Endothelial cell of umbilical vein (primary cell): ENCODE measurements at regions of chr11 and their contacts with region 1.

Region 1: GRCh38 chr11:66069715-66070603 is at the start of gene PACS1:
- DNase-seq: peak; percentile 69
- H3K4me3 ChIP-seq: peak within 1 kb of the TSS; percentile 70 to 91 (median 86)
- H3K27ac ChIP-seq: peak within 1 kb of the TSS; percentile 43
- H3K4me1 ChIP-seq: peaks cover 21% of the 10 kb centered on the region
- H3K27me3 ChIP-seq: no peaks in the 10 kb centered on the region
- CTCF ChIP-seq: peak in 1 of 2 donors; percentile 0
- POLR2A ChIP-seq: peak; percentile 73
- total RNA-seq, gene PACS1: 52.8 and 64.4 TPM in 2 replicates

Region 2: DNA sequence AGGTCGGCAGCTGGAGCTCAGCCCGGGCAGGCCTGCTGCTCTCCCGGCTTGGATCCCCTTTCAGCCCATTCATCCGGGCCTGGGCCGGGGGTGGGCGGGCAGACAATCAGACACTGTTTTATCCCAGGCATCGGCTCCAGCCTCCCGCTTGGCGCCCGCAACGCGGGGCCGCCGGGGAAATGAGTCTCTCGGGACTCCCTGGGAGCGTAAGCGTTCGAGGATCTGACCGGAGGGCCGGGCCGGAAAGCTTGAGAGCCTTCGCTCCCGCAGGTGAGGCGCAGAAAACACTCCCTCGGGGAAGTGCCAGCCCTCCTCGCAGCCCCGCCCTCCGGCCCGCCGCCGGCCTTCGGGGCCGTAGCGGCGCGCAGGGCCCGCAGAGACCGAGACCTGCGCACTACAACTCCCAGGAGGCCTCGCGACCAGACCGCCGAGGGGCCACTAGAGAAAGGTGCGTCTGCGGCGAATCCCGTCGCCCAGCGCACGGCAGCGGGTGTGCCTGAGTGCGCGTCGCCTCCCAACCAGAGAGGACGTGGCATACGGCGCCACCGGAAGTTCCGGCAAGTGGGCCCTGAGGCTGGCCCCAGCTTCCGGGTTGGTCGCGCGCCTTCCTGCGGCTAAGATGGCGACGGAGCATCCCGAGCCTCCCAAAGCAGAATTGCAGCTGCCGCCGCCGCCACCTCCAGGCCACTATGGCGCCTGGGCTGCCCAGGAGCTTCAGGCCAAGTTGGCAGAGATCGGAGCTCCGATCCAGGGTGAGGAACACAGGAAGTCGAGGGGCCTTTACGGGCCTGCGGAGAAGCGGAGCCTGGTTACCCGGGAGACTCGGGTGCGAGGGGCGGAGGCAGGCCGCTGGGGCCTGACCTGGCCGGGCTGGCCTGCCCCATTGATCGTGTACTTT is 17.9 kb before region 1 on chr11 and contains the start of gene SF3B2:
- CTCF ChIA-PET with region 1: interaction called, 16 read pairs
- POLR2A ChIA-PET with region 1: no interaction called
- dilution Hi-C with region 1: no loop called
- intact Hi-C with region 1: loop called (anchors 1 kb)
- DNase-seq: peak; percentile 99
- H3K4me3 ChIP-seq: peak within 1 kb of the TSS; percentile 67 to 93 (median 80)
- H3K27ac ChIP-seq: peak within 1 kb of the TSS; percentile 63
- H3K4me1 ChIP-seq: peaks cover 14% of the 10 kb centered on the region
- H3K27me3 ChIP-seq: peaks cover 0 to 1% of the 10 kb centered on the region in 2 experiments
- CTCF ChIP-seq: no peak
- POLR2A ChIP-seq: peak; percentile 88
- total RNA-seq, gene SF3B2: 179 and 196 TPM in 2 replicates

Region 3: GRCh38 chr11:66081505-66081904 is 11.5 kb after region 1 on chr11:
- CTCF ChIA-PET with region 1: interaction called, 18 read pairs
- POLR2A ChIA-PET with region 1: no interaction called
- dilution Hi-C with region 1: no loop called
- intact Hi-C with region 1: no loop called
- DNase-seq: peak; percentile 44
- H3K4me3 ChIP-seq: no peak overlapping the region
- H3K27ac ChIP-seq: peak overlapping the region; percentile 52
- H3K4me1 ChIP-seq: peaks cover 40% of the 10 kb centered on the region
- H3K27me3 ChIP-seq: no peaks in the 10 kb centered on the region
- CTCF ChIP-seq: no peak
- POLR2A ChIP-seq: no peak

Region 4: GRCh38 chr11:66112601-66113098 is 42.7 kb after region 1 on chr11:
- CTCF ChIA-PET with region 1: interaction called, 10 read pairs
- POLR2A ChIA-PET with region 1: no interaction called
- dilution Hi-C with region 1: no loop called
- intact Hi-C with region 1: loop called (anchors 5 kb)
- DNase-seq: peak; percentile 87
- H3K4me3 ChIP-seq: no peak overlapping the region
- H3K27ac ChIP-seq: peak overlapping the region; percentile 54
- H3K4me1 ChIP-seq: peaks cover 47% of the 10 kb centered on the region
- H3K27me3 ChIP-seq: no peaks in the 10 kb centered on the region
- CTCF ChIP-seq: no peak
- POLR2A ChIP-seq: no peak

Region 5: DNA sequence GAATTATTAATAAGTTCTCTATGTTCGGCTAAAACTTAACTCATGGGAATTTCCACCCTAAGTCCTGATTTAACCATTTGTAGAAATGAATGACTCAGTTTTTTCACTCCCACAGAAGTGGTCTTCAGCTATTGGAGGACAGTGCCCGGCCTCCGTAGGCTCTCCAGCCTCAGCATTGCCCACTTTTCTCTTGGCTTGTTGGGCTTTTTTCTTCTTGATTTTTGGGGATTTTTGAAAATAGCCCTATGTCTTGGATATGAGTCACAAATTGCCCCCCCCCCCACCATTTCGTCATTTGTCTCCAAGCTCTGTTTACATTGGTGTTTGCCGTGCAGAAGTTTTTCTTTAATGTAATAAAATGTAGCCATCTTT is 66.8 kb after region 1 on chr11:
- CTCF ChIA-PET with region 1: interaction called, 85 read pairs
- POLR2A ChIA-PET with region 1: interaction called, 4 read pairs
- dilution Hi-C with region 1: no loop called
- intact Hi-C with region 1: loop called (anchors 1 kb)
- DNase-seq: no peak
- H3K4me3 ChIP-seq: no peak overlapping the region
- H3K27ac ChIP-seq: peak overlapping the region; percentile 27
- H3K4me1 ChIP-seq: peaks cover 13% of the 10 kb centered on the region
- H3K27me3 ChIP-seq: no peaks in the 10 kb centered on the region
- CTCF ChIP-seq: no peak
- POLR2A ChIP-seq: no peak

Region 6: DNA sequence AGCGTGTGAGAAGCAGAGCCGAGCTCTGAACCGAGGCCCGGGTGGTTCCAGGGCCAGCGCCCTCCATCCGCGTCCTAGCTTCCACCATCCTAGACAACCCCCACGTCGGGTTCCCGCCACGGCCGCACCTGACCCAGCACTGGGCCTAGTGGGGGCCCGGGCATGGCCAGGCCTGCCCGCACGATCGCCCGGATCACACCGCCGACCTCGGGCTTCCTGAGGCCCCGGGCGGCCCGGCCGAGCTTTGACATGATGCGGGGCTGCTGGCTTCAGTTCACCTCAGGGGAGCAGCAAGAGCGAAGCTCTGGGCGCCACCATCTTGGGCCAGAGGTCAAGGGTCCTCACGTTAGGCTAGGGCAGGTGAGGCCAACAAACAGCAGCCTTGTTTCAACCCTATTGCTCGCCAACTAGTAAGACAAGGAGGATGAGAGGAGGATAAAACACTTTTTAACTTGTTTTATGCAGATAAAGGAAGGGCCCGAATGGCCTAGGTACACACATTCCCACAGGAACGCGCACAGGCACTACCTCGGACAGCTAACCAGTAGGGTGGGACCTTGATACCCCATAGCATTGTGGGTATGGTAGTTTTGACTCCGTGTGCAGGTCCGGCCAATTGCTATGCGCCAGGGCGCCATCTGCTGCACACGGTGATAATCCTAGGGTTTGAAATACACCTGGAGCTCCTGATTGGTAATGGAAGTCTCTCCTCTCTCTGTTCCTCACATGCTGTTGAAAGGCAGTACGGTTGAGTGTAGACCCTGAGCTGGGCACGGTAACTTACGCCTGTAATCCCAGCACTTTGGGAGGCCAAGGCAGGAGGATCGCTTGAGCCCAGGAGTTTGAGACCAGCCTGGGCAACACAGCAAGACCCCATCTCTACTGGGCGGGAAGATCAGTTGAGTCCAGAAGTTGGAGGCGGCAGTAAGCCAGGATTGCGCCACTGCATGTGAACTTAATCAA is 368.8 kb after region 1 on chr11 and contains the start of gene MRPL11:
- CTCF ChIA-PET with region 1: no interaction called
- POLR2A ChIA-PET with region 1: no interaction called
- dilution Hi-C with region 1: no loop called
- intact Hi-C with region 1: no loop called
- DNase-seq: peak; percentile 95
- H3K4me3 ChIP-seq: peak within 1 kb of the TSS; percentile 59 to 80 (median 64)
- H3K27ac ChIP-seq: peak within 1 kb of the TSS; percentile 77
- H3K4me1 ChIP-seq: peaks cover 6% of the 10 kb centered on the region
- H3K27me3 ChIP-seq: no peaks in the 10 kb centered on the region
- CTCF ChIP-seq: peak; percentile 70 to 77
- POLR2A ChIP-seq: no peak
- total RNA-seq, gene MRPL11: 69.1 and 72.1 TPM in 2 replicates